Endothelial cell of umbilical vein (primary cell): ENCODE measurements at regions of chr18 and their contacts with region 1.

Region 1: GRCh38 chr18:67515945-67516538 is 478 bp downstream of the DSEL start:
- DNase-seq: peak; percentile 84
- H3K4me3 ChIP-seq: peak overlapping the region; percentile 82 to 96 (median 94)
- H3K27ac ChIP-seq: peak overlapping the region; percentile 79
- H3K4me1 ChIP-seq: peaks cover 8% of the 10 kb centered on the region
- H3K27me3 ChIP-seq: no peaks in the 10 kb centered on the region
- CTCF ChIP-seq: peak; percentile 61 to 84
- POLR2A ChIP-seq: no peak

Region 2: DNA sequence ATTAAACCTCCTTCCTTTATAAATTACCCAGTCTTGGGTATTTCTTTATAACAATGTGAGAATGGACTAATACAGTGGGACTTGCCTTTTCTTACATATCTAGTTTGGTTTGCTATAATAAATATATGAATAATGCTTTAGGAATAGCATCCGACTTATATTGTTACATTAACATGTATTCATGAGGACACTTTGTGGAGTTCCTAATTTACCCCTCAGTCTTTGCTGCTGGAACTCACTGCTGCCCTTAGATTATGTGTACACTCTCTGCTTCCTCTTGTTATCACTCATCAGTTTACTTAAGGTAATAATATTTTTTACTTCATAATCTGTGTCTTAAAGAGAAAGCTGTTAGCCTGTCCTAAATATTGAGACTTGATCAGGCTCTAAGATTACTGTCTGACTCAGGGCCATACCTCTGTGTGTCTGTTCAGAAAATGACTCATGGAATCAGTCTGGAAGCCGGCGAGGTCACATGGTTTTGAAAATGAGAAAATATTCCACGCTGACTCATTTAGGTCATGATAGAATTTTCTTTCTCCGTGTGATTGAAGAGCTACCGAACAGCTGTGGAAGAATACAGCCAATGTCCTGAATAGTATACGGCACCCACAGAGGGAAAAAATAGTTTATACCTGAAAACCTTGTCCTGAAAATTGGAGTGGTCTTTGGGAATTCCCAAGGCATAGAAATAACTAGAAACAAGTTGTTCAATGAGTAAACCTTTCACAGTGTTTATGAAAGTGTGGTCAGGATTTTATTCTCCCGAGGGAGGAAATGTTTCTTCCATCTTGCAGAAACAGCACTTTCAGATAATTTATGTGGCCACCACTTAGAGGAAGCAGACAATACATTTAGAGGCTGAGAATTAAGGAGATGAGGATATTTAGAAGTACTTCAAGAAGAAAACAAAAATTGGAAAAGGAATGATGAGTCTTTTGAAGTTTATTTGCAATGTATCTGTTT is 155.9 kb before region 1 on chr18:
- CTCF ChIA-PET with region 1: interaction called, 3 read pairs
- POLR2A ChIA-PET with region 1: no interaction called
- dilution Hi-C with region 1: no loop called
- intact Hi-C with region 1: loop called (anchors 5 kb)
- DNase-seq: peak; percentile 97
- H3K4me3 ChIP-seq: peak overlapping the region; percentile 1 to 64 (median 21)
- H3K27ac ChIP-seq: peak overlapping the region; percentile 78
- H3K4me1 ChIP-seq: peaks cover 16% of the 10 kb centered on the region
- H3K27me3 ChIP-seq: no peaks in the 10 kb centered on the region
- CTCF ChIP-seq: no peak
- POLR2A ChIP-seq: no peak

Region 3: DNA sequence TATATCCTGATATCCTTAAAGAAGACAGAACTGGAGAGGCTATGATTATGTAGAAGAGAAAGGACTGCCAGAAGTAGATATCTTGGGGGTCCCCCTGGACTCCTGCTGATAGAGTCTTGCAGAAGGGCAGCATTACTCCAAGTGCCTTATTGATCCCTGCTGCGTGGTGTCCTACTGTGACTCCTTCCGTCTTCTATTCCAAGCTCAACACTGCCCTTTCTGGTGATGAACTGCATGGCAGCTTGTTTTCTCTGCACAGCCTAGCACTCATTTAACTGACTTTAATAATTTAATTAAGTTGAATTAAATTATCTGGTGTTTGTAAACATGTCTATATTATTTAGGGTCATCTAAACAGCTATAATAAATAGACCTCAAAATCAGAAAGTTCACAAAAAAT is 194.6 kb after region 1 on chr18:
- CTCF ChIA-PET with region 1: interaction called, 15 read pairs
- POLR2A ChIA-PET with region 1: no interaction called
- dilution Hi-C with region 1: no loop called
- intact Hi-C with region 1: loop called (anchors 2 kb)
- DNase-seq: no peak
- H3K4me3 ChIP-seq: no peak overlapping the region
- H3K27ac ChIP-seq: no peak overlapping the region
- H3K4me1 ChIP-seq: no peaks in the 10 kb centered on the region
- H3K27me3 ChIP-seq: no peaks in the 10 kb centered on the region
- CTCF ChIP-seq: peak in 1 of 2 donors; percentile 1
- POLR2A ChIP-seq: no peak

Region 4: GRCh38 chr18:67845035-67845434 is 329.0 kb after region 1 on chr18:
- CTCF ChIA-PET with region 1: interaction called, 14 read pairs
- POLR2A ChIA-PET with region 1: no interaction called
- dilution Hi-C with region 1: no loop called
- intact Hi-C with region 1: loop called (anchors 10 kb)
- DNase-seq: peak; percentile 2
- H3K4me3 ChIP-seq: no peak overlapping the region
- H3K27ac ChIP-seq: no peak overlapping the region
- H3K4me1 ChIP-seq: no peaks in the 10 kb centered on the region
- H3K27me3 ChIP-seq: no peaks in the 10 kb centered on the region
- CTCF ChIP-seq: no peak
- POLR2A ChIP-seq: no peak

Region 5: GRCh38 chr18:68660354-68661183 is 1144.5 kb after region 1 on chr18:
- CTCF ChIA-PET with region 1: interaction called, 66 read pairs
- POLR2A ChIA-PET with region 1: no interaction called
- dilution Hi-C with region 1: no loop called
- intact Hi-C with region 1: loop called (anchors 1 kb)
- DNase-seq: peak; percentile 42
- H3K4me3 ChIP-seq: no peak overlapping the region
- H3K27ac ChIP-seq: no peak overlapping the region
- H3K4me1 ChIP-seq: no peaks in the 10 kb centered on the region
- H3K27me3 ChIP-seq: peaks cover 0 to 1% of the 10 kb centered on the region in 2 experiments
- CTCF ChIP-seq: peak; percentile 24 to 32
- POLR2A ChIP-seq: no peak

Region 6: GRCh38 chr18:68735483-68736343 is 1219.7 kb after region 1 on chr18:
- CTCF ChIA-PET with region 1: no interaction called
- POLR2A ChIA-PET with region 1: no interaction called
- dilution Hi-C with region 1: no loop called
- intact Hi-C with region 1: loop called (anchors 1 kb)
- DNase-seq: peak; percentile 61
- H3K4me3 ChIP-seq: no peak overlapping the region
- H3K27ac ChIP-seq: no peak overlapping the region
- H3K4me1 ChIP-seq: no peaks in the 10 kb centered on the region
- H3K27me3 ChIP-seq: no peaks in the 10 kb centered on the region
- CTCF ChIP-seq: peak; percentile 36 to 58
- POLR2A ChIP-seq: no peak